ENCODE measurements at regions of chr3 and their contacts with region 1.

Region 1: DNA sequence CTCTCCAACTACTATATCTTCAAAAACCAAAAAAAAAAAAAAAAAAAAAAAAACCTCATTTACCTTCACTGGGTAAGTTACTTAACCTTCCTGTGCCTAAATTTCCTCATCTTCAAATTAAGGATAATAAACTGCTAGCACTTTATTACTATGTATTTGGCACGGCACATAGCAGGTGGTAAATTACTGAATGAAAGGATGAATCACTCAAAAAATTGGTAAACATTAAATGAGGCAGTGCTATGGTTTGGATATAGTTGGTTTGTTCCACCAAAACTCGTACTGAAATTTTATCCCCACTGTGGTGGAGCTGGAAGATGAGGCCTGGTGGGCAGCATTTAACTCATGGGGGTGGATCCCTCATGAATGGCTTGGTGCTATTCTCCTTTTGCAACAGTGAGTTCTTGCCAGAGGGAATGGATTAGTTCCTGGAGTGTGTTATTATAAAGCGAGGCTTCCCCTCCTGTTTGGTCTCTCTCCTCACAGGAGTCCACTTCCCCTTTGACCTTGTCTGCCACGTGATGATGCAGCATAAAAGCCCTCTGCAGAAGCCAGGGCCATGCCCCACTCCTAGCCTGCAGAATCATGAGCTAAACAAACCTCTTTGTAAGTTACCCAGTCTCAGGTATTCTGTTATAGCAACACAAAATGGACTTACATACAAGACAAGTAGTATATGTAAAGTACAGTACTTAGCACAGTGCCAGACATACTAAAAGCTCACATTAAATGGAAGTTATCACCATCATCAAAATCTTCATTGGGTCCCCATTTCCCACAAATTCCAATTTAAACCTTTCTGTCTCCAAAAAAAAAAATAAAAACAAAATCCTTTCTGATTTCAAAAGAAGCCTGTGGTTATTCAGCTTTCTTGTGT is 20.6 kb downstream of the DCUN1D1 start:
- DNase-seq: no peak
- ATAC-seq: peak in 1 of 2 donors; percentile 13
- H3K4me3 ChIP-seq: no peak overlapping the region
- H3K27ac ChIP-seq: peak overlapping the region; percentile 71 to 86 (median 81)
- H3K4me1 ChIP-seq: peaks cover 59 to 79% of the 10 kb centered on the region in 2 donors
- H3K27me3 ChIP-seq: no peaks in the 10 kb centered on the region
- CTCF ChIP-seq: no peak
- POLR2A ChIP-seq: no peak

Region 2: DNA sequence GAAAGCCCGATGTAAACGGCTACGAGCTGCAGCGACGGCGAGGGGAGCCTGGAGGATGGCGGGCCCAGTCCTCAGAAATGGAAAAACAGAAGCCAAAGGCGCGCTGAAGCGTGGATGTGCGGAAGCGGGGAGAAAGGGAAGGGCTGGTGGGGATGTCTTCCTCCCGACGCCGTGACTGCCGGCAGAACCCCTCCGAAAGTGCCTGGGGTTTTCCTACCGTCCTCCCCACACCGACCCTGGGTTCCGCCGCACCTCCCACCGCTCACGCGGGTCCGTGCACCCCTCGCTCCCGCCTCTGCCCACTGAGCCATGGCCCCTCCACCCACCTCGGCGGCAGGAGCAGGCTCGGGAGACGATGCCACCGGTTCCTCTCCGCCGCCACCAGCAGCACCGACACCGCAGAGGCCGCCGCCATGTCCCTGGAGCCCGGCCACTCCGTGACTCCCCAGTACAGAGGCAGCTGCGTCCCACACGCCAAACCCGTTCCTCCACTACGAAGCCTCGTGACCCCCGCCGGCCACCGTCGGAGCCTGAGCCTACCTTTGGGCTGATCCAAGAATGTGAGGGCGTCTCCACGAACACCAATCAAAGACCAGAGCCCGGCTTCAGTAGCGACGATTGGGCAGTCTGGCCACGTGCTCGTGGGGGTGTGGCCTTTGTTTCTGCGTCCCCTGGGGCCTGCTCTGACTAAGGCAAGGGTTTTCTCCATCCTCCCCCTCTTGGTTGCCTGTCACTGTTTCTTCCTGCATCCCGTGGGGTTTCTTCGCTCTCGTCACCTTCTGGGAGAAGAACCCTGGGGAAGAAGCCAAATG is 139.5 kb after region 1 on chr3 and contains the start of gene MCCC1:
- in situ Hi-C with region 1: no loop called
- intact Hi-C with region 1: loop called (anchors 5 kb)
- DNase-seq: peak; percentile 98 to 99
- ATAC-seq: peak; percentile 99
- H3K4me3 ChIP-seq: peak within 1 kb of the TSS; percentile 76 to 95 (median 82)
- H3K27ac ChIP-seq: peak within 1 kb of the TSS; percentile 86 to 94 (median 92)
- H3K4me1 ChIP-seq: peaks cover 5 to 15% of the 10 kb centered on the region in 2 donors
- H3K27me3 ChIP-seq: no peaks in the 10 kb centered on the region
- CTCF ChIP-seq: peak in 1 of 5 experiments; percentile 7
- POLR2A ChIP-seq: peak; percentile 86 to 88
- total RNA-seq, gene MCCC1: 11.5 to 24.5 (median 20.6) TPM

Measured in gastrocnemius medialis (tissue), 4 donors.